ENCODE measurements at regions of chr5 and their contacts with region 1.

Region 1: GRCh38 chr5:157820593-157821252 is 38.2 kb downstream of the CLINT1 start:
- DNase-seq: no peak
- H3K4me3 ChIP-seq: no peak overlapping the region
- H3K27ac ChIP-seq: peak overlapping the region; percentile 51 to 56
- H3K4me1 ChIP-seq: peaks cover 0 to 64% (median 16%) of the 10 kb centered on the region in 4 donors
- H3K27me3 ChIP-seq: no peaks in the 10 kb centered on the region
- CTCF ChIP-seq: peak; percentile 47 to 53

Region 2: GRCh38 chr5:157858527-157859226 is 38.0 kb after region 1 on chr5 and contains the start of gene CLINT1:
- intact Hi-C with region 1: loop called (anchors 5 kb)
- DNase-seq: peak; percentile 90 to 94
- H3K4me3 ChIP-seq: peak within 1 kb of the TSS; percentile 80 to 98
- H3K27ac ChIP-seq: peak within 1 kb of the TSS; percentile 90
- H3K4me1 ChIP-seq: peaks cover 0 to 41% (median 18%) of the 10 kb centered on the region in 4 donors
- H3K27me3 ChIP-seq: no peaks in the 10 kb centered on the region
- CTCF ChIP-seq: no peak

Region 3: GRCh38 chr5:157993986-157994691 is 173.4 kb after region 1 on chr5:
- intact Hi-C with region 1: loop called (anchors 2 kb)
- DNase-seq: no peak
- H3K4me3 ChIP-seq: no peak overlapping the region
- H3K27ac ChIP-seq: no peak overlapping the region
- H3K4me1 ChIP-seq: peaks cover 0 to 4% (median 0%) of the 10 kb centered on the region in 4 donors
- H3K27me3 ChIP-seq: no peaks in the 10 kb centered on the region
- CTCF ChIP-seq: no peak